Posterior vena cava (tissue), 2 donors: ENCODE measurements at regions of chr3 and their contacts with region 1.

Region 1: GRCh38 chr3:13099707-13100106 is 26.5 kb upstream of the IQSEC1 start:
- DNase-seq: no peak

Region 2: DNA sequence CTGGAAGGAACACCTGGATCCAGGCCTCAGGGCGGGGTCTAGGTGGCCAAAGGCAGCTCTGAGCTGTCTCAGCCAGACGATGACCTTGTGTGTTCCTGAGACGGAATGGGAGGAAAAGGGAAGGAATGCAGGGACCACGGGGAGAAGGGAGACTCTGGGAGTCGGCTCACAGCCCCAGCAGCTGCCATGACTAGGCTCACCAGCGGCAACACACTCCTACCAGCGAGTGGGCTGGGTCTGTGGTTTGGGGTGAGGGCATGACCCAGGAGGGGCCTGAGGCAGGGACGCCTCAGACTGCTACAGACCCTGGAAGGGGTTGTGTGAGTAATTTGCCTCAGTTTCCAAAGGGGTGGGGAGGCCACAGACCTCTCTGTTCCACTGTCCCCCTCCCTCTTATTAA is 46.3 kb before region 1 on chr3:
- intact Hi-C with region 1: loop called in 1 of 2 experiments (anchors 1 kb)
- DNase-seq: no peak